Activated T-helper 2 cell treated with anti-CD3 and anti-CD28 coated beads, Interferon-gamma antibody, Interleukin-2, Interleukin-4, amounts not matched to agents 10 μg/mL and 5 μg/mL and 100 μg/mL, durations not matched to agents 14 hours and 24 hours and 36 hours (primary cell): ENCODE measurements at regions of chr7 and their contacts with region 1.

Region 1: GRCh38 chr7:70693686-70694360 is 438.1 kb upstream of the GALNT17 start:
- DNase-seq: no peak
- H3K4me3 Mint-ChIP-seq: peak overlapping the region; percentile 70
- H3K27ac Mint-ChIP-seq: no peak overlapping the region
- H3K4me1 Mint-ChIP-seq: peaks cover 7% of the 10 kb centered on the region
- H3K27me3 Mint-ChIP-seq: peaks cover 55% of the 10 kb centered on the region

Region 2: GRCh38 chr7:70477036-70478010 is 216.5 kb before region 1 on chr7:
- intact Hi-C with region 1: no loop called
- DNase-seq: no peak
- H3K4me3 Mint-ChIP-seq: no peak overlapping the region
- H3K27ac Mint-ChIP-seq: no peak overlapping the region
- H3K4me1 Mint-ChIP-seq: no peaks in the 10 kb centered on the region
- H3K27me3 Mint-ChIP-seq: no peaks in the 10 kb centered on the region

Region 3: GRCh38 chr7:70500261-70500660 is 193.6 kb before region 1 on chr7:
- intact Hi-C with region 1: loop called (anchors 5 kb)
- DNase-seq: no peak
- H3K4me3 Mint-ChIP-seq: no peak overlapping the region
- H3K27ac Mint-ChIP-seq: no peak overlapping the region
- H3K4me1 Mint-ChIP-seq: no peaks in the 10 kb centered on the region
- H3K27me3 Mint-ChIP-seq: no peaks in the 10 kb centered on the region

Region 4: DNA sequence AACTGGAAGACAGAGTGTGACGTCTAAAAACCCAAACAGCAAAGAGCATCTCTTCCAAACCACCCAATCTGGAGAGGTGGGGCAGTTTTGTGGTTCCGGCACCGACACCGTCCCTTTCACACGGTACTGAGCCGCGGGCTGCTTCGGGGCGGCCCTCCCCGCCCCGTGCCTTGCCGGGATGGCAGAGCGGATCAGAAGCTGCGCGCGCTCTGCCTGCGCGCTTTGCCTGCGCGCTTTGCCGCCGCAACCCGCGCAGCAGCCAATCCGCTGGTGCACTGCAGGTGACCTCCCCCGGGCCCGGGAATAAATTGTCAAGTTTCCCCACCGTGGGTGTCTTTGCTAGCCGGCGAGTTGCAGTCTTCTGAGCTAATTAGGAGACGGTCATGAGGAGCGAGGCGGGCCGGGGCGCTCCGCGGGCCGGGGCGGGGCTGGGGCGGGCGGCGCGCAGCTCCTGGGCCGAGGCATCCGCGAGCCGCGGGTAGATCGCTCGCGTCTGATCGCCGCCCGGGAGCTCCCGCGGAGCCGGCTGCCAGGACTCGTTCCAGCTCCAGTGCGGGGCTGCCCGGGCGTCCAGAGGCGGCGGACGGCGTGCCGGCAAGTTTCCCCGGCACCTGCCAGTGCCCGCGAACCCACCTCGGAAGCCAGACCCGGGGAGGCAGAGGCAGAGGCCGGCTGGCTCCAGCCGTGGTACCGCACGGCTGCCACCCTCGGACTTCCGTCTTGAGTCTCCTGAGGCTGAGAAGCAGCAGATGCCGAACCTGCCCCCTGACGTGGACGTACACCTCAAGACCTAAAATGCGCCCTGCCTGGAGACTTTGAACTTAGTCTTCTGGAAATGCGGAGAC is 97.8 kb before region 1 on chr7:
- intact Hi-C with region 1: loop called (anchors 10 kb)
- DNase-seq: no peak
- H3K4me3 Mint-ChIP-seq: no peak overlapping the region
- H3K27ac Mint-ChIP-seq: no peak overlapping the region
- H3K4me1 Mint-ChIP-seq: no peaks in the 10 kb centered on the region
- H3K27me3 Mint-ChIP-seq: peaks cover 31% of the 10 kb centered on the region